MCF 10A (cell line): ENCODE measurements at regions of chr13 and their contacts with region 1.

Region 1: DNA sequence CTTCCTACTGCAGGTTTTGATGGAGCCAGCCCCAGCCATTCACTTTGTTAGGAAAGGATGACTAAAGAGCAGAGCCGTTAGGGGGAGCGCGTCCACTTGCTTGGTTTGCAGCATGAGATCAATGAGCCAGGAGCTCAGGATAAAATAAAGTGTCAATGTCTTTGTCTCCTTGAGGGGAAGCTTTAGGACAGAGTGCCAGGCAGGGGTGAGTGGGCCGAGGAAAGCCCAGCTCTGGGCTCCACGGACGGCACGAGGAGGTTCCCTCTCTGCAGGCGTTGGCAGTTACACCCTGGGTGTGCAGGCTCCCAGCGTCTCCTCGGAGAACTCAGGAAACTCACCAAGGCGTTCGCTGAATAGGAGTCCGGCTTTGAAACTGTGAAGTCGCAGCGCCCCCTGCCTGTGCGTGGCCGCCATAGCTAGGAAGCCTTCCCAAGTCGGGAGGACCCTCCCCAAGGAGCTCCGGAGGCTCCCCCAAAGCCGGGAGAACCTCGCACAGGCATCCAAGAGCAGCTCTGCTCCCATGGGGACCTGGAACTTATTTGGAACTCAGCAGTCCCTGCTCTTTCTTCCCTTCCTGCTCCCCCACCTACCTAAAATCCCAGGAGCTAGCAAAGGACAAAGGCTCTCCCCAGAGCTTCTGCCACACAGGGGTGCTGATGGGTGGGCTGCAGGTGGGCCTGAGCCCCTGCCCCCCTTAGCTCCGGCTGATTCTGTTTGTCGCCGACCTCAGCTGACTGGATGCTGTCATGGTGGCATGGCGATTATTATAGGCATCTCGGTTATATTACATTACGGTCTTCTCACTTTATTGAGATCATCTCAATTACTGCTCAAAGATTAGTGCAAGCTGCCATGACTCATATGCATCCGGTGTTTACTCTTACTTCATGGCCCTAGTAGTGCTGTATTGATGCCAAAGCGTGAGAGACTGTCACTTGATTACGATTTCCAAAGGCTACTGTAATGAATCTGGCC is 34.4 kb downstream of the GSX1 start:
- DNase-seq: peak; percentile 87
- H3K4me3 Mint-ChIP-seq: peak overlapping the region; percentile 66
- H3K27ac Mint-ChIP-seq: peak overlapping the region; percentile 66
- H3K4me1 Mint-ChIP-seq: peaks cover 21% of the 10 kb centered on the region
- H3K27me3 Mint-ChIP-seq: peaks cover 29% of the 10 kb centered on the region
- CTCF ChIP-seq: peak; percentile 95

Region 2: GRCh38 chr13:27374650-27375049 is 452.0 kb before region 1 on chr13:
- CTCF ChIA-PET with region 1: interaction called, 95 read pairs
- POLR2A ChIA-PET with region 1: interaction called, 4 read pairs
- intact Hi-C with region 1: loop called (anchors 1 kb)
- DNase-seq: peak; percentile 86
- H3K4me3 Mint-ChIP-seq: no peak overlapping the region
- H3K27ac Mint-ChIP-seq: no peak overlapping the region
- H3K4me1 Mint-ChIP-seq: no peaks in the 10 kb centered on the region
- H3K27me3 Mint-ChIP-seq: peaks cover 10% of the 10 kb centered on the region
- CTCF ChIP-seq: peak; percentile 66

Region 3: GRCh38 chr13:27424246-27425157 is 402.2 kb before region 1 on chr13 and contains the start of gene GTF3A:
- CTCF ChIA-PET with region 1: interaction called, 27 read pairs
- POLR2A ChIA-PET with region 1: interaction called, 11 read pairs
- intact Hi-C with region 1: no loop called
- DNase-seq: peak; percentile 84
- H3K4me3 Mint-ChIP-seq: peak within 1 kb of the TSS; percentile 75
- H3K27ac Mint-ChIP-seq: peak within 1 kb of the TSS; percentile 57
- H3K4me1 Mint-ChIP-seq: peaks cover 29% of the 10 kb centered on the region
- H3K27me3 Mint-ChIP-seq: no peaks in the 10 kb centered on the region
- CTCF ChIP-seq: no peak
- total RNA-seq, gene GTF3A: 124 and 159 TPM in 2 replicates

Region 4: DNA sequence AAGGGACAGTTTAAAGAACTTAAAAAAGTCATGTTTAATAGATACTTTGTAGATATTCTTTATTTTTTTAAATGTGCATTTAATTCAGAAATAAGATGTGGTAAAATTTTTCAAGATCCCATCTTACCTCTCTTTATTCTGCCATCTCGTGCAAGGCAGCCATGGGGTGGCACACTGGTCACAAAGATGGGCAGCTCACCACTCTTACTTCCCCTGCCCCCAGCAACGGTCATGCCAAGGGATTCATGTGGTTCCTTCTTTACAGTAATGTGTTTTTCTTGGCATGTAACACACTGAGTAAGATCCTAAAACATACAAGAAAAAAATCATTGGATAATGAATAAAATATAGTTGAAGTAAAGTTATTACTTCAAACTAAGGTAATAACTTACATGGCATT is 270.6 kb before region 1 on chr13:
- CTCF ChIA-PET with region 1: interaction called, 31 read pairs
- POLR2A ChIA-PET with region 1: interaction called, 4 read pairs
- intact Hi-C with region 1: loop called (anchors 1 kb)
- DNase-seq: peak; percentile 83
- H3K4me3 Mint-ChIP-seq: no peak overlapping the region
- H3K27ac Mint-ChIP-seq: no peak overlapping the region
- H3K4me1 Mint-ChIP-seq: peaks cover 10% of the 10 kb centered on the region
- H3K27me3 Mint-ChIP-seq: no peaks in the 10 kb centered on the region
- CTCF ChIP-seq: peak; percentile 10

Region 5: GRCh38 chr13:27783111-27783510 is 43.6 kb before region 1 on chr13:
- CTCF ChIA-PET with region 1: interaction called, 11 read pairs
- POLR2A ChIA-PET with region 1: no interaction called
- intact Hi-C with region 1: no loop called
- DNase-seq: peak; percentile 13
- H3K4me3 Mint-ChIP-seq: no peak overlapping the region
- H3K27ac Mint-ChIP-seq: no peak overlapping the region
- H3K4me1 Mint-ChIP-seq: no peaks in the 10 kb centered on the region
- H3K27me3 Mint-ChIP-seq: peaks cover 27% of the 10 kb centered on the region
- CTCF ChIP-seq: peak; percentile 22

Region 6: DNA sequence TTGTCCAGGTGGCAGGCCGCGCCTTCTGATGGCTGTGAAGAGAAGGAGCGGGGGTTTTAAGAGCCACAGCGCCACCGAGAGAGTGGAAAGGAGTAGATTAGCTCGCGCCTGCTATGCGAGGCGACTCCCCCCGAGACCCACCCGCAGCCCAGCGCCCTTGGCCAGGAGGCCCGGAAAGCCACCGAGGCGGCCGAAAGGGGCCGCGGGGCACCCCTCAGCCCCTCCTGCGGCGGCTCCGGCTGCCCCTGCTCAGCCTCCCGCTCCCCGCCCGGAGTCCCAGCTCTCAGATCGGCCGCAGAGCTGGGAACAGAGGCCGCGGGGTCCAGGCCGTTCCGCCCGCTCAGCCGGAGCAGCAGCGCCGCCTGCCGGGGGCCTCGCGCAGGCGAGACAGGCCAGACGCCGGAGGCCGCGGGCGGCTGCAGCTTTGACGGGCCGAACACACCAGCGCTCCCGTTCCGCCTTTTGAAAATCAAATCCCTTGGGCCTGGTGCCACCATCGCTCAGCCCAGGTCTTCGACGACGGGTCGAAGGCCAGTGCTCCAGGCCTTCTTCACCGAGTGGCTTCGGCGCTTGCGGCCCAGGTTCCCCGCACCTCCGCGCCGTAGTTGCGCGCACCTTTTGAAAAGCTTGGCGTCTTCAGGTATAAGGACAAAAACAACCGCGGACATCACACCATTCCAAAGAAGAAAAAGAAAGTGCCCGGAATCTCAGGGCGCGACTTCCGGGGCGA is 127.2 kb after region 1 on chr13:
- CTCF ChIA-PET with region 1: interaction called, 85 read pairs
- POLR2A ChIA-PET with region 1: interaction called, 6 read pairs
- intact Hi-C with region 1: loop called (anchors 1 kb)
- DNase-seq: peak; percentile 70
- H3K4me3 Mint-ChIP-seq: peak overlapping the region; percentile 37
- H3K27ac Mint-ChIP-seq: peak overlapping the region; percentile 62
- H3K4me1 Mint-ChIP-seq: no peaks in the 10 kb centered on the region
- H3K27me3 Mint-ChIP-seq: no peaks in the 10 kb centered on the region
- CTCF ChIP-seq: peak; percentile 96